ENCODE measurements at regions of chr20 and their contacts with region 1.

Region 1: DNA sequence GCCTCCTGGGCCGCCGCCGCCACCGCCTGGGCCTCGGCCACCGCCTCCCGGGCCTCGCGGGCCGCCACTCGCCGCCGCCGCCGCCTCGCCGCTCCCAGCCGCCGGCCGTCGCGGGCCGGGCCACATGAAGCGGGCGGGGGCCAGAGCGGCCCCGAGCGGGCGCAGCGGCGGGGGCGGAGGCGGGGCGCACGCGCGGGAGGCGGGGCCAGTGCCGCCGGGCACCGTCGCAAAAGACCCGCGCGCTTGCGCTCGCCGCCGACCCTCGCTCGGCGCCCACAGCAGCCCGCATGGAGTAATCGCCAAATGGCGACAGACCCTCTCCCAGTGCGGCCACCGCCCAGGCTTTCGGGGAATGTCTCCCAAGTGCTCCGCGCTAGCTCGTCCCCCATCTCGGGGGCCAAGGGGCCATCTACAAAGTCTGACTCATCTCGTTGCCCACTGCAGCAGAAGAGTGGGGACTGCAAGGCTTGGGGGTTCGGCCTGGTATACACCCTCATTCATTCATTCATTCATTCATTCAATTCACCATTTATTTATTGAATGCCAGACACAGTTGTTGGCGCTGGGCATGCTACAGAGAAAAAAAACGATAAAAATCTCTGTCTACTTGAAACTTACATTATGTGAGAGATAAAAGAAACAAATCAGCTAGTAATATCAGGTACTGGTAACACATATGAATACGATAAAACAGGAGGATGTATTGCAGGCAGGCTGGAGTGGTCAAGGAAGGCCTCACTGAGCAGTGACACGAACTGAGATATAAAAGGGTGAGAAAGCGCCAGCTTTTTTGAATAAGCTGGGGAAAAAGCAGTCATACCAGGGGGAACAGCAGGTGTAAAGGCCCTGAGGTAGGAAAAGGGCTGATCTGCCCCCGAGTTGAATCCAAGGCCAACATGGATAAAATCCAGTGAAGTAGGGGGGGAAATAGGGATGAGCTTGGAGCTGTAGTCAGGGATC is at the start of gene B4GALT5:
- DNase-seq: no peak
- ATAC-seq: peak; percentile 76
- H3K4me3 ChIP-seq: peak within 1 kb of the TSS; percentile 97
- H3K27ac ChIP-seq: peak within 1 kb of the TSS; percentile 80
- H3K4me1 ChIP-seq: peaks cover 5% of the 10 kb centered on the region; the same call in 1 of the 2 replicates
- H3K27me3 ChIP-seq: no peaks in the 10 kb centered on the region
- CTCF ChIP-seq: no peak
- EP300 ChIP-seq: no peak
- POLR2A ChIP-seq: no peak
- RAD21 ChIP-seq: no peak
- polyA plus RNA-seq, gene B4GALT5: 10.0 to 15.3 TPM

Region 2: GRCh38 chr20:49460916-49461315 is 253.1 kb before region 1 on chr20:
- CTCF ChIA-PET with region 1: no interaction called
- POLR2A ChIA-PET with region 1: no interaction called
- RAD21 ChIA-PET with region 1: no interaction called
- SMC1A ChIA-PET with region 1: no interaction called
- in situ Hi-C with region 1: no loop called
- intact Hi-C with region 1: no loop called
- DNase-seq: no peak
- ATAC-seq: no peak
- H3K4me3 ChIP-seq: no peak overlapping the region
- H3K27ac ChIP-seq: no peak overlapping the region
- H3K4me1 ChIP-seq: no peaks in the 10 kb centered on the region
- H3K27me3 ChIP-seq: peaks cover 3% of the 10 kb centered on the region in 2 experiments
- CTCF ChIP-seq: no peak
- EP300 ChIP-seq: no peak
- POLR2A ChIP-seq: no peak
- RAD21 ChIP-seq: no peak

Region 3: GRCh38 chr20:49583669-49584417 is 130.2 kb before region 1 on chr20:
- CTCF ChIA-PET with region 1: no interaction called
- POLR2A ChIA-PET with region 1: no interaction called
- RAD21 ChIA-PET with region 1: no interaction called
- SMC1A ChIA-PET with region 1: no interaction called
- in situ Hi-C with region 1: no loop called
- intact Hi-C with region 1: no loop called
- DNase-seq: no peak
- ATAC-seq: no peak
- H3K4me3 ChIP-seq: no peak overlapping the region
- H3K27ac ChIP-seq: no peak overlapping the region
- H3K4me1 ChIP-seq: no peaks in the 10 kb centered on the region
- H3K27me3 ChIP-seq: peaks cover 3 to 8% of the 10 kb centered on the region in 2 experiments; a peak in 2 of 4 replicates
- CTCF ChIP-seq: no peak
- EP300 ChIP-seq: no peak
- POLR2A ChIP-seq: no peak
- RAD21 ChIP-seq: no peak

Region 4: GRCh38 chr20:49690899-49691620 is 23.0 kb before region 1 on chr20:
- CTCF ChIA-PET with region 1: interaction called, 7 read pairs
- POLR2A ChIA-PET with region 1: interaction called, 9 read pairs
- RAD21 ChIA-PET with region 1: interaction called, 49 read pairs
- SMC1A ChIA-PET with region 1: interaction called, 51 read pairs
- in situ Hi-C with region 1: no loop called
- intact Hi-C with region 1: no loop called
- DNase-seq: no peak
- ATAC-seq: peak; percentile 42
- H3K4me3 ChIP-seq: no peak overlapping the region
- H3K27ac ChIP-seq: peak overlapping the region; percentile 12; the same call in 1 of the 2 replicates
- H3K4me1 ChIP-seq: peaks cover 52% of the 10 kb centered on the region
- H3K27me3 ChIP-seq: no peaks in the 10 kb centered on the region
- CTCF ChIP-seq: no peak
- EP300 ChIP-seq: no peak
- POLR2A ChIP-seq: no peak
- RAD21 ChIP-seq: no peak

Region 5: DNA sequence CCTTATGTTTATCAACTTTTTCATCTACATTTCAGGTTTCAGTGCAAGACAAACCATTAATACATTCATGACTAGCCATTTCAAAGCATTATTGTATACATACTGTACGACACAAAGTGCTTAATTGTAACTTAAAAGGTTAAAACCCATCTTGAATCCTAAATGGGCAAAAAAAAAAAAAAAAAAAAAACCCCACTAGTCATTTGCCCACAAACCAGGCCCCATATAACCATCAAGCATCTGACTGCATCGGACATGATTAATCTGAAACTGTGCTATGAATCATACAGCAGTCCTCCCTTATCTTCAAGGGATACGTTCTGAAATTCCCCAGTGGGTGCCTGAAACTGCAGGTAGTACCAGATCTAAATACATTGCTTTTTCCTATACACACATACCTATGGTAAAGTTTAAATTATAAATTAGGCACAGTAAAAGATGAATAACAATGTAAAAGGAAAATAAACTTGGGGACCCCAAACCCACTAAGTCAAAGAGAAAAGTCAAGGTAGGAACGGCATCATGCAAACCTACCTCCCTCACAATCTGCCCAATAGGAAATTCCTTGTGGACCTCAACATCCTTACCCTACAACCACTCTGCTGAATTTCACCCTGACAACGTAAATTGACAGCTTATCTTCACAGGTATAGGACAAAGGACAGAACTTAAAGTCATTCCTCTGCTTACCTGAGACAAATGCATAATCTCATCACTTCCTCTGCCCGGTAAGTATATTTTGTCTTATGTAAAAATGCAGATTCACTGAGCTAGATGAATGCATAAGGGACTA is 14.6 kb before region 1 on chr20:
- CTCF ChIA-PET with region 1: interaction called, 7 read pairs
- POLR2A ChIA-PET with region 1: interaction called, 9 read pairs
- RAD21 ChIA-PET with region 1: interaction called, 49 read pairs
- SMC1A ChIA-PET with region 1: interaction called, 51 read pairs
- in situ Hi-C with region 1: no loop called
- intact Hi-C with region 1: no loop called
- DNase-seq: no peak
- ATAC-seq: peak; percentile 90
- H3K4me3 ChIP-seq: peak overlapping the region; percentile 40
- H3K27ac ChIP-seq: peak overlapping the region; percentile 73
- H3K4me1 ChIP-seq: peaks cover 59% of the 10 kb centered on the region
- H3K27me3 ChIP-seq: no peaks in the 10 kb centered on the region
- CTCF ChIP-seq: no peak
- EP300 ChIP-seq: peak; percentile 53 to 75; a peak in 1 of 4 replicates
- POLR2A ChIP-seq: no peak
- RAD21 ChIP-seq: no peak

Region 6: GRCh38 chr20:49812463-49813304 is 98.7 kb after region 1 on chr20 and contains the start of gene SLC9A8:
- CTCF ChIA-PET with region 1: interaction called, 3 read pairs
- POLR2A ChIA-PET with region 1: interaction called, 7 read pairs
- RAD21 ChIA-PET with region 1: interaction called, 8 read pairs
- SMC1A ChIA-PET with region 1: interaction called, 12 read pairs
- in situ Hi-C with region 1: no loop called
- intact Hi-C with region 1: no loop called
- DNase-seq: peak; percentile 78
- ATAC-seq: peak; percentile 93
- H3K4me3 ChIP-seq: peak within 1 kb of the TSS; percentile 76
- H3K27ac ChIP-seq: peak within 1 kb of the TSS; percentile 78
- H3K4me1 ChIP-seq: peaks cover 6% of the 10 kb centered on the region
- H3K27me3 ChIP-seq: no peaks in the 10 kb centered on the region
- CTCF ChIP-seq: peak; percentile 10 to 44 (median 36); a peak in 3 of 6 replicates
- EP300 ChIP-seq: peak in 1 of 2 experiments; percentile 7; a peak in 1 of 4 replicates
- POLR2A ChIP-seq: peak; percentile 85
- RAD21 ChIP-seq: no peak
- polyA plus RNA-seq, gene SLC9A8: 0.40 to 0.53 TPM